ENCODE measurements at regions of chr10 and their contacts with region 1.

Region 1: DNA sequence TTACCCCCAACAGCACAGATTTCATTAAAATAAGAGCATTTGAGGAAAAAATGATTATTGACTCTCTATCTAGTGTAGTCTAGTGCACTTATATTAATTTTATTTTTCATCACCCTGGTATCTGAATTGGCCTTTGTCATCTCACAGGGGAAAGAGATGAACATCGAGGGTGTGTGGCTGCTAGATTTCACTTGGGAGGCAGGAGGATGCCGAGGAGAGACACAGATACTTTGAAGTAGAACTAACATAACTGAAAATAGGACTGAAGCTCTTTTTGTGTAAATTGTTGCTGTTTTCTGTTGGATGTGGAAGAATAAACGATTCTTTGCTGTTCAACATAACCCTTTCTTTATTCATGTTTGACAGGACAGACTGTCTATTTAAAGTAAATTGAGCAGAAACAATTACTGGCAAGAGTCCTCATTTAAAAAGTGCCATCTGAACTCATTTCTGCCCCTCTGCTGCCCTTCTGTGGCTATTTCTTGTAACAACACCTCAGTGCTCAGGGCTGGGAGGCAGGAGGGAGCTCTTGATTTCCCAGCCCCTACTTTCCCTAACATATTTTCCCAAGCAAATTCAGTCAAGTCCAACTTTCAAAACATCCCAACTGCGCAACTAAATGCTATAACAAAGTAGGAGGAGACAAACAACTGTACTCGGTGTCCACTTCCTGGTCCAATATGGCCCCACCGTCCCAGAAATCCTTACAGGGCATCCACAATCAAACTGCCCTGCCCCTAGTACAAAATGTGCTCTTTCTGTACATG is 15.6 kb downstream of the LYZL1 start:
- DNase-seq: peak; percentile 73 to 79
- ATAC-seq: peak; percentile 77 to 92; a peak in 5 of 6 replicates
- H3K4me3 ChIP-seq: no peak overlapping the region
- H3K27ac ChIP-seq: peak overlapping the region; percentile 60 to 77
- H3K4me1 ChIP-seq: 0 out of 3 replicates have a peak, but pooled peaks cover 9% of the 10 kb centered on the region
- CTCF ChIP-seq: peak; percentile 90
- EP300 ChIP-seq: no peak
- POLR2A ChIP-seq: no peak
- RAD21 ChIP-seq: peak; percentile 97 to 98

Region 2: DNA sequence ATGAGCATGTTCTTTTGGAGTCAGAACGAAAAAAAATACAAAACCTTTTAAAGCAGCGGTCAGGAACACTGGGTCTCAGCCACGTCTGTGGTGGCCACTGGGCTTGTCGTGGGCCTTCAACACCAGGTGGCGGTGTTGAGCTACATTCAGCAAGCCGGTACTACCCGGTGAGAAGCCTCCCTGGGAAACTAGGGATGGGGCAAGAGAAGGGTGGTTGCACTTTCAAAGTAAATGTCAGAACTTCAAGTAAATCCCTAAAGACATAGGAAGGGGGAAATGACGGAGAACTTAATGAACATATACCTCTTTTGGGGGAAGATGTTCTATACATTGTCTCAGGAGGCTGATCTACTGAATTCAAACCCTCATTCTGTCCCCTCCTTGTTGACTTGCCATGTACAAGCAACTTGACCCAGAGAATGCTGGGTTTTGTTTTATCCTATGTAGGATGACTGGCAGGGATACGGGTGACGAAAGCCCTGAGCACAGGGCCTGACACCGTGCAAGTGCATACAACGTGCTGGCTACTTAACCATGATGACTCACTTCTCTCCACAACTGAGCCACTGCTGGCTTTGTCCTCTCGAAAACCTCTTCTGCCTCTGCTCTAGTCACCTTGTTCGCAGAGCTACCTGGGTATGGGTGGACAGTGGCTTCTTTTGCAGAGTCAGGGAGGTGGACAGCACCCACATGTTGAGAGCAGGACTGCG is 676.1 kb before region 1 on chr10:
- CTCF ChIA-PET with region 1: interaction called, 22 read pairs
- POLR2A ChIA-PET with region 1: no interaction called
- DNase-seq: peak; percentile 80 to 84
- ATAC-seq: peak; percentile 89 to 92
- H3K4me3 ChIP-seq: no peak overlapping the region
- H3K27ac ChIP-seq: peak overlapping the region; percentile 26 to 55; a peak in 5 of 6 replicates
- H3K4me1 ChIP-seq: peaks cover 19% of the 10 kb centered on the region
- CTCF ChIP-seq: peak; percentile 96
- EP300 ChIP-seq: no peak
- POLR2A ChIP-seq: no peak
- RAD21 ChIP-seq: peak; percentile 92 to 97

Region 3: GRCh38 chr10:28839600-28840007 is 464.8 kb before region 1 on chr10:
- CTCF ChIA-PET with region 1: no interaction called
- POLR2A ChIA-PET with region 1: no interaction called
- DNase-seq: peak in 1 of 2 experiments; percentile 69
- ATAC-seq: peak in 1 of 2 experiments; percentile 51; a peak in 3 of 6 replicates
- H3K4me3 ChIP-seq: no peak overlapping the region
- H3K27ac ChIP-seq: peak overlapping the region; percentile 36 to 55; a peak in 5 of 6 replicates
- H3K4me1 ChIP-seq: peaks cover 47% of the 10 kb centered on the region
- CTCF ChIP-seq: no peak
- EP300 ChIP-seq: no peak
- POLR2A ChIP-seq: no peak
- RAD21 ChIP-seq: no peak

Region 4: DNA sequence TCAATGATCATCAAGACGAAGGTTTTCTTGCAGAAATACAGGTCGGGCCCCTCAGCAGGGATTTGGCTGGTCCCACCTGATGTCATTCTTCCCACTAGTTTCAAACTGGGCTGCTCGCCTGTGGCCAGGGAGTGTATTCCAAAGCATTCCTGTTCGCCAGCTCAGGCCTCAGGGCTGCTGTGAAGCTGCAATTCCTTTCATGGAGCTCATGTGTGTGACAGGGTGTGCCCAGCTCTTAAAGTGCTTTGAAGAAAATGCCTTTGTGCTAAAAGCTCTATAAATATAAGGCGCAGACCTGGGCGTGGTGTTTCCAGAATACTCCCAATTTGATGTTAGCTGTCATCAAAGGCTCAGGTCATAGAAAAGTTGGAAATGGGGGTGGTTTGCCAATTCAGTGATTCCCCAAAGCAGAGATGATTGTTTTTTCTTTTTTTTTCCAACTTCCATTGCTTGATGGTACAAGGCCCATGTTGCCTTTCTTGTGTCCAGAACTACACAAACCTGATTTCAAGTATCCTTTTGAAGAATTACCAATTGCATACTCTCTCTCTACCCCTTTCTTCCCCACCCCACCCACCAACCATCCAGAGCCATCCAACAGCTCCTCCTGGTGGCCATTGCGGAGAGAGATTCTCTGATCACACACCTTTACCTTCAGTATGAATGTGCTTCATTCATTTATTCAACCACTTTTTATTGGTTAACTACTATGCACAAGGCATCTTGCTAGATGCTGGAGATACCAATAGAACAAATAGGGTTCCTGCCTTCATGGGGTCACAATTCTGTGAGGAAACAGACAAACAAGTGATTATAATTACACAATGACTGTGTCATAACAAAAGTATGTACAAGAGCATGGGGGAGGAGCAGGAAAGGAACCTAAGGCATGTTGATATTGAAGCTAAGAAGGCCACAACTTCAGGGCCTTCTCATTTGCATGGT is 312.8 kb before region 1 on chr10:
- CTCF ChIA-PET with region 1: interaction called, 33 read pairs
- POLR2A ChIA-PET with region 1: no interaction called
- DNase-seq: peak; percentile 60 to 88
- ATAC-seq: peak; percentile 89 to 92
- H3K4me3 ChIP-seq: no peak overlapping the region
- H3K27ac ChIP-seq: peak overlapping the region; percentile 65 to 80
- H3K4me1 ChIP-seq: peaks cover 24% of the 10 kb centered on the region
- CTCF ChIP-seq: peak; percentile 92
- EP300 ChIP-seq: peak in 1 of 2 experiments; percentile 35; a peak in 1 of 5 replicates
- POLR2A ChIP-seq: no peak
- RAD21 ChIP-seq: peak; percentile 98

Region 5: GRCh38 chr10:29131952-29132820 is 172.3 kb before region 1 on chr10:
- CTCF ChIA-PET with region 1: interaction called, 19 read pairs
- POLR2A ChIA-PET with region 1: no interaction called
- DNase-seq: no peak
- ATAC-seq: peak in 1 of 2 experiments; percentile 61; a peak in 3 of 6 replicates
- H3K4me3 ChIP-seq: no peak overlapping the region
- H3K27ac ChIP-seq: peak overlapping the region; percentile 37 to 73
- H3K4me1 ChIP-seq: peaks cover 19% of the 10 kb centered on the region
- CTCF ChIP-seq: no peak
- EP300 ChIP-seq: no peak
- POLR2A ChIP-seq: no peak
- RAD21 ChIP-seq: no peak

Region 6: GRCh38 chr10:29150003-29150402 is 154.4 kb before region 1 on chr10:
- CTCF ChIA-PET with region 1: interaction called, 10 read pairs
- POLR2A ChIA-PET with region 1: no interaction called
- DNase-seq: no peak
- ATAC-seq: peak; percentile 34 to 70; a peak in 3 of 6 replicates
- H3K4me3 ChIP-seq: no peak overlapping the region
- H3K27ac ChIP-seq: peak overlapping the region; percentile 21 to 65; a peak in 4 of 6 replicates
- H3K4me1 ChIP-seq: peaks cover 13% of the 10 kb centered on the region
- CTCF ChIP-seq: no peak
- EP300 ChIP-seq: 0 out of 5 replicates have a peak, but pooled peaks of 1 of the 2 experiments have one; percentile 11
- POLR2A ChIP-seq: no peak
- RAD21 ChIP-seq: no peak

Region 7: DNA sequence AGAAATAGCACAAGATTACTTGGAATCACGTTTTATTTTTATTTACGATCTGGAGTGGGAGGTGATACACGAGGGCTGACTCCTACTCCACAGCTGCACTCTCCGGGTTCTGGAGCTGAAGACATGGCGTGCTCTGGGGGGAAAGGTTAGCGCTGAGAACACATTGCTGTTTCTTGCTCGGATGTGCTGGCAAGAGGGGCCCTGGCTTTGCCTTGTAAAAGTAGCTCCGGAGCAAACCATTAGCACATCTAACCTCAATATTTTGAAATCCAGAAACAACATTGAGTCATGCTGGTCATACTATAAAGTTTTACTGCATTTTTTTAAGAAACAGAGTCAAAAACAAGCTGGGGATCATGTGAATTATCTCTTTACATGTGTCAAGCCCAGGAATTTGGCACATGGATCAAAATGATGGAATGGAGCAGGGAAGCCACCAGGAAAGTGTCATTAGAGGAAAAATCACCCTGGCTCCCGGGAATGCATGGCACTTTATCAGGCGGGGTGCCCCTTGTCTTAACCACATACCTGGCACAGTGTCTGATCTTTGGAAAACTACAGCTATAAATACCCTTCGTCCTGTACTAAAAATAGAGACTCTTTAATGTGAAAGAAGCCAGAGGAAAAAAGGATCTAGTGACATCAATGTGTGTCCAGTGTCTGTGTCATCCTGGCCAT is 47.2 kb before region 1 on chr10:
- CTCF ChIA-PET with region 1: interaction called, 11 read pairs
- POLR2A ChIA-PET with region 1: no interaction called
- DNase-seq: peak in 1 of 2 experiments; percentile 33
- ATAC-seq: peak; percentile 69 to 73; a peak in 5 of 6 replicates
- H3K4me3 ChIP-seq: no peak overlapping the region
- H3K27ac ChIP-seq: peak overlapping the region in 1 of 2 experiments; percentile 58; a peak in 2 of 6 replicates
- H3K4me1 ChIP-seq: peaks cover 28% of the 10 kb centered on the region
- CTCF ChIP-seq: no peak
- EP300 ChIP-seq: no peak
- POLR2A ChIP-seq: no peak
- RAD21 ChIP-seq: no peak; a peak in 1 of 5 replicates

Region 8: DNA sequence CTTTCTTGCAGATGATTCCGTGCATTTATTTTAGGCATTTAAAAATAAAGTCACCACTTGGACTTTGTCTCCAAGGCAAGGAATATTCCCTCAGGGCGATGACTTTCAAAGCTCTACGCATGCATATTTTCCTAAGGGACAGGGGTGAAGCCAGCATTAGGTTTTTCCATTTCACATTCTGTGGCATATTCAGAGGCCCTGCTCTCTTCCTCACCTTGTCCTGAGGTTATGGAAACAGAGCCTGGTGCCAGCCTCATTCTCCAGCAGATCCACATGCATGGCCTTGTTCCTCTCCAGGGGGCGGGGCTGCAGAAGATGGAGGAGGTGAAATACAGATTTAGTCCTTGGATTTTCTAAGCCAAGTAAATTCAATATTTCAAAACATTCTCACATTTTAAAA is 27.2 kb before region 1 on chr10:
- CTCF ChIA-PET with region 1: no interaction called
- POLR2A ChIA-PET with region 1: no interaction called
- DNase-seq: no peak
- ATAC-seq: no peak
- H3K4me3 ChIP-seq: no peak overlapping the region
- H3K27ac ChIP-seq: no peak overlapping the region
- H3K4me1 ChIP-seq: peaks cover 15% of the 10 kb centered on the region; the same call in 2 of the 3 replicates
- CTCF ChIP-seq: no peak
- EP300 ChIP-seq: no peak
- POLR2A ChIP-seq: no peak
- RAD21 ChIP-seq: no peak

Region 9: GRCh38 chr10:29317027-29317420 is 12.6 kb after region 1 on chr10:
- CTCF ChIA-PET with region 1: interaction called, 24 read pairs
- POLR2A ChIA-PET with region 1: no interaction called
- DNase-seq: no peak
- ATAC-seq: no peak
- H3K4me3 ChIP-seq: no peak overlapping the region
- H3K27ac ChIP-seq: peak overlapping the region; percentile 10 to 82; a peak in 5 of 6 replicates
- H3K4me1 ChIP-seq: peaks cover 57% of the 10 kb centered on the region
- CTCF ChIP-seq: no peak
- EP300 ChIP-seq: no peak
- POLR2A ChIP-seq: no peak
- RAD21 ChIP-seq: no peak

Measured in A549 (cell line).